Activated CD8-positive, alpha-beta T cell treated with anti-CD3 and anti-CD28 coated beads for 36 hours (primary cell): ENCODE measurements at regions of chr3 and their contacts with region 1.

Region 1: DNA sequence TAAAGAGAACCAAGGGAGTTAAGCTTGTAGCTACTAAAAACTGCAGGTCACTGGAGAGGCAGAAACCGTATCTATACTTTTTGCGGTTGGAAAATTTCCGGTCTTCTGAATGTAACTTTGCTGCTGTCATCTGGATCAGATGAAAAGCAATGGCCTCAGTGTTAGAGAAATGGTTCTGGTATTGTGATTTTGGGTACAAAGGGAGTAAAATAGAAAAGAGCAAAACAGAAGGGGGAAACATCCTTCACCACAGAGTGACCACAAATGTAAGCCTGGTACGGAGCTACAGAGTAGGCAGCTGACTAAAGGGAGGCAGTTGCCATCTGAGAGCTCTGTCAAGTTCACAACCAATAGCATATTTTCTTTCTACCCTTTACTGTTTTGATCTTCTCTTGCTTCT is 5.6 kb downstream of the CD96 start:
- DNase-seq: peak; percentile 80
- ATAC-seq: peak; percentile 66
- H3K4me3 Mint-ChIP-seq: no peak overlapping the region
- H3K27ac Mint-ChIP-seq: no peak overlapping the region
- H3K4me1 Mint-ChIP-seq: peaks cover 41% of the 10 kb centered on the region
- H3K27me3 Mint-ChIP-seq: no peaks in the 10 kb centered on the region
- CTCF ChIP-seq: no peak

Region 2: DNA sequence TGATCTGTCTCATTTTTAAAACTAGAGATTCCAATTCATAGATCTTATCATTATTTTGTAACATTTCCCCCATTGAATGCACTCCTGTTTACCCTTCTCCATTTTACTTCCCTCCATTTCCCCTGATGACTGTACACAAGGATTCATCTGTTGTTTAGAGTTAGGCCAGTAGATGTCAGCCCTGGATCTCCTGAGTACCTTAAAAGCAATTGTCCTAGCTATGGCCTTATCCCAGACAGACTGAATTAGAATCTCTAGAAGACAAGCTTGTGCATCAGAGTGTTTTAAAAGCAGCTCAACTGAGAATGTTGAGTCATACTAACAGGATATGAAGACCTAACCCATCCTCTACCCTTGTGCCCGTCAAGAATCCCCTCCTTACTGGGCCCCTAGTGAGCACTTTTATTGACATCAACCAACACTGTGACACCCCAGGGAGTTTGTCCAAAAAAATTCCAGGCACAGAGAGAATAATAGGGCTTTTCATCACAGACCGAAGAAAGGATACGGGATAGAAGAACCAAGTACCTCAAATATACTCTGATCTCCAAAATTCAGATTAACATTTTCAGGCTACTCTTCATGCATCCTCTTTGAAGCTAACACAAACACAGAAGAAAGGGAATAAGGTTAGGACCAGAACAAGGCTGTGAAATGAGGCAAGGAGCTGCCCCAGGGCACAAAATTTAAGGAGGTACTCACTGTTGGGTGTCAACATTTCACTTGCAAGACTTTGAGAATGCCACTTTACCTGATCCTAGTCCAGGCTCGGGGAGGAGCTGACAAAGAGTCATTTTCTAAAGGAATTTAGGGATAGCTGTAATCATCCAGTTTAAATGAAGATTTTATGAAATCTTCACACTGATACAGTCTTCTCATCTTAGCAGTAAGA is 30.4 kb after region 1 on chr3:
- CTCF ChIA-PET with region 1: interaction called, 9 read pairs
- POLR2A ChIA-PET with region 1: interaction called, 5 read pairs
- intact Hi-C with region 1: loop called (anchors 5 kb)
- DNase-seq: no peak
- ATAC-seq: peak; percentile 88
- H3K4me3 Mint-ChIP-seq: no peak overlapping the region
- H3K27ac Mint-ChIP-seq: peak overlapping the region; percentile 73
- H3K4me1 Mint-ChIP-seq: peaks cover 80% of the 10 kb centered on the region
- H3K27me3 Mint-ChIP-seq: no peaks in the 10 kb centered on the region
- CTCF ChIP-seq: peak; percentile 64

Region 3: DNA sequence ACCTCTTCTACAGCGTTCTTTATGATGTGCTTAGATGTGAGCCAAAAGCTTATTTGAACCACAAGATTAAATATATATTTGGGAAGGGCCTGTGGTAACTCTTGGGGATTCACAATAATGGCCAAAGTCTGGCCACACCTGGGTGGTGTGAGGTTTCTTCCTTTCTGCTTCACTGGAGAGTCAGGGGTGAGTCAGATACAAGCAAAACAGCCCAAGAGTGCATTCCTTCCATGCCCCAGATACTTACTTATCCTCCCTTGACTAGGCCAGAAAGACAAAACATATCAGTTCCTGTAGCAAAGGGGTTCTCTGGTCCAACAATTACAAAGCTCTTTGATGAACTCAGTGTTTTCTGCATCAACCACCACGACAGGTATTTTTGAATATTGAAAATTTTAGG is 46.6 kb after region 1 on chr3:
- CTCF ChIA-PET with region 1: interaction called, 5 read pairs
- POLR2A ChIA-PET with region 1: interaction called, 24 read pairs
- intact Hi-C with region 1: loop called (anchors 5 kb)
- DNase-seq: no peak
- ATAC-seq: peak; percentile 12
- H3K4me3 Mint-ChIP-seq: peak overlapping the region; percentile 97
- H3K27ac Mint-ChIP-seq: peak overlapping the region; percentile 97
- H3K4me1 Mint-ChIP-seq: peaks cover 64% of the 10 kb centered on the region
- H3K27me3 Mint-ChIP-seq: no peaks in the 10 kb centered on the region
- CTCF ChIP-seq: no peak

Region 4: DNA sequence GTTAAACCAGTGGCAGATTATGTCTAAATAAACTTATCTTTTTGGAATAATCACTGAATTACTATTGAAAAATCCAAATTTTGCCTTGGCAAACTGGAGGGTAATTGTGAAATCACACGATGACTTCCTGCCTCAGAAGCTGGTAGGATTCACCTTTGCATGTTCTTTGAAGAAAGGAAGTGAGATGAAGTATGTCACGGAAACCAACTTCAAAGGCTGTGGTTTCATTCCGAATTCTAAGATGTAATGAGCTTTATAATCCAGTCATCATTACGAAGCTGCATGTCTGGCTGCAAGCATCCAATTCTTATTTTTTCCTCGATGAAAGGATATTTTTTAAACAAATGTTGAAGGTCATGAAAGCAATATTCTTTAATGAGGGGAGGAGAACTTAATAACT is 62.6 kb after region 1 on chr3:
- CTCF ChIA-PET with region 1: interaction called, 54 read pairs
- POLR2A ChIA-PET with region 1: interaction called, 20 read pairs
- intact Hi-C with region 1: loop called (anchors 2 kb)
- DNase-seq: peak; percentile 68
- ATAC-seq: peak; percentile 53
- H3K4me3 Mint-ChIP-seq: peak overlapping the region; percentile 63
- H3K27ac Mint-ChIP-seq: peak overlapping the region; percentile 93
- H3K4me1 Mint-ChIP-seq: peaks cover 96% of the 10 kb centered on the region
- H3K27me3 Mint-ChIP-seq: no peaks in the 10 kb centered on the region
- CTCF ChIP-seq: no peak

Region 5: GRCh38 chr3:111616417-111617105 is 68.9 kb after region 1 on chr3:
- CTCF ChIA-PET with region 1: interaction called, 54 read pairs
- POLR2A ChIA-PET with region 1: interaction called, 12 read pairs
- intact Hi-C with region 1: loop called (anchors 2 kb)
- DNase-seq: peak; percentile 82
- ATAC-seq: peak; percentile 83
- H3K4me3 Mint-ChIP-seq: peak overlapping the region; percentile 30
- H3K27ac Mint-ChIP-seq: peak overlapping the region; percentile 93
- H3K4me1 Mint-ChIP-seq: peaks cover 80% of the 10 kb centered on the region
- H3K27me3 Mint-ChIP-seq: no peaks in the 10 kb centered on the region
- CTCF ChIP-seq: peak; percentile 62

Region 6: GRCh38 chr3:111668912-111669488 is 121.4 kb after region 1 on chr3:
- CTCF ChIA-PET with region 1: interaction called, 15 read pairs
- POLR2A ChIA-PET with region 1: interaction called, 5 read pairs
- intact Hi-C with region 1: loop called (anchors 2 kb)
- DNase-seq: no peak
- ATAC-seq: peak; percentile 50
- H3K4me3 Mint-ChIP-seq: no peak overlapping the region
- H3K27ac Mint-ChIP-seq: peak overlapping the region; percentile 68
- H3K4me1 Mint-ChIP-seq: peaks cover 84% of the 10 kb centered on the region
- H3K27me3 Mint-ChIP-seq: no peaks in the 10 kb centered on the region
- CTCF ChIP-seq: peak; percentile 84

Region 7: GRCh38 chr3:111691293-111691909 is 143.8 kb after region 1 on chr3:
- CTCF ChIA-PET with region 1: interaction called, 11 read pairs
- POLR2A ChIA-PET with region 1: interaction called, 4 read pairs
- intact Hi-C with region 1: no loop called
- DNase-seq: no peak
- ATAC-seq: no peak
- H3K4me3 Mint-ChIP-seq: no peak overlapping the region
- H3K27ac Mint-ChIP-seq: no peak overlapping the region
- H3K4me1 Mint-ChIP-seq: peaks cover 75% of the 10 kb centered on the region
- H3K27me3 Mint-ChIP-seq: no peaks in the 10 kb centered on the region
- CTCF ChIP-seq: peak; percentile 18